Activated CD4-positive, alpha-beta memory T cell treated with anti-CD3 and anti-CD28 coated beads for 36 hours (primary cell): ENCODE measurements at regions of chr12 and their contacts with region 1.

Region 1: DNA sequence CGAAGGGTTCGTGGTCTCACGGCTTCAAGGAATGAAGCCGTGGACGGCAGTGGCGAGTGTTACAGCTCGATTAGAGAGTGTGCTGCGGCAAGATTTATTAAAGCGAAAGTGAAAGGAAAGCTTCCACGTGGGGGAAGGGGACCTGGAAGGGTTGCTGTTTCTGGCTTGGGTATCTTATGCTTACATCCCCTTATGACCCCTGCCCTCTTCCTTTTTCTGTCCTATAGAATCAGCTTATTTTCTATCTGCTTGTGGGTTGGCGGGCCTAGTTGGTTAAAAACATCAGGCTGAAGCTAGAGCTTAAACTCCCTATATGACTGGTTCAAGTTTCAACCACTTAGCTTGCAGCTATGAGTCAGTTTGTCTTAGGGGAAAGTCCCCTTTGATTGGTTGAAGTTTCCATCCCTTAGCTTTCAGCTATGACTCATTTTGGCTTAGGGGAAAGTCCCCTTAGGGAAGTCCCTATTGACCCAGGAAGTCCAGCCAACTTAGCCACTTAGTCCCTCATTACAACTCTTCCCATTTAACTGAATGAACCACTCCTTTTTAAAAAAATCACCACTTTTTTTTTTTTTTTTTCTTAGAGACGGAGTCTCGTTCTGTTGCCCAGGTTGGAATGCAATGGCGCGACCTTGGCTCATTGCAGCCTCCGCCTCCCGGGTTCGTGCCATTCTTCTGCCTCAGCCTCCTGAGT is 1494.7 kb upstream of the TMEM132C start:
- DNase-seq: peak; percentile 67
- H3K4me3 Mint-ChIP-seq: peak overlapping the region; percentile 84
- H3K27ac Mint-ChIP-seq: peak overlapping the region; percentile 93
- H3K4me1 Mint-ChIP-seq: peaks cover 28% of the 10 kb centered on the region
- H3K27me3 Mint-ChIP-seq: no peaks in the 10 kb centered on the region

Region 2: GRCh38 chr12:126708492-126708896 is 63.8 kb before region 1 on chr12:
- CTCF ChIA-PET with region 1: no interaction called
- POLR2A ChIA-PET with region 1: interaction called, 7 read pairs
- intact Hi-C with region 1: loop called (anchors 1 kb)
- DNase-seq: peak; percentile 47
- H3K4me3 Mint-ChIP-seq: no peak overlapping the region
- H3K27ac Mint-ChIP-seq: peak overlapping the region; percentile 45
- H3K4me1 Mint-ChIP-seq: peaks cover 12% of the 10 kb centered on the region
- H3K27me3 Mint-ChIP-seq: peaks cover 1% of the 10 kb centered on the region

Region 3: DNA sequence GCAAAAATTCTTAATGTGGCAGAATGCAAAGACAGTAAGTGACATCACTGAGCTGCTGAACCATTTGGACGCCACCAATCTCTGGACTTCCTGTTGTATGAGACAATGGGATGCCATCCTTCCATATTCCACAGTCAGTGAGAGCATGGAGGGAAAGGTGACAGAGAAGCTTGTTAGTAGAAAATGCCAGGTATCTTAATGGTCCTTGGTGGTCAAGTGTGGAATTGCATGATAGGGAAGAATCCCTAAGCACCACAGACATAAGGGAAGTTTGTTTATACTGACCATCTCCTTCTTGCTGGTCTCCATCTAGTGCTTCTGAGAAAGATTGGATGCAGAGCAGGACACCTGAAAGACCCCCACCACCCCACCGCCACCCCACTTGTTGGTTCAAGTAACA is 84.6 kb after region 1 on chr12:
- CTCF ChIA-PET with region 1: no interaction called
- POLR2A ChIA-PET with region 1: no interaction called
- intact Hi-C with region 1: no loop called
- DNase-seq: no peak
- H3K4me3 Mint-ChIP-seq: no peak overlapping the region
- H3K27ac Mint-ChIP-seq: no peak overlapping the region
- H3K4me1 Mint-ChIP-seq: no peaks in the 10 kb centered on the region
- H3K27me3 Mint-ChIP-seq: no peaks in the 10 kb centered on the region

Region 4: GRCh38 chr12:127083008-127083949 is 311.0 kb after region 1 on chr12:
- CTCF ChIA-PET with region 1: no interaction called
- POLR2A ChIA-PET with region 1: no interaction called
- intact Hi-C with region 1: loop called (anchors 1 kb)
- DNase-seq: peak; percentile 20
- H3K4me3 Mint-ChIP-seq: peak overlapping the region; percentile 36
- H3K27ac Mint-ChIP-seq: no peak overlapping the region
- H3K4me1 Mint-ChIP-seq: peaks cover 14% of the 10 kb centered on the region
- H3K27me3 Mint-ChIP-seq: peaks cover 4% of the 10 kb centered on the region

Region 5: DNA sequence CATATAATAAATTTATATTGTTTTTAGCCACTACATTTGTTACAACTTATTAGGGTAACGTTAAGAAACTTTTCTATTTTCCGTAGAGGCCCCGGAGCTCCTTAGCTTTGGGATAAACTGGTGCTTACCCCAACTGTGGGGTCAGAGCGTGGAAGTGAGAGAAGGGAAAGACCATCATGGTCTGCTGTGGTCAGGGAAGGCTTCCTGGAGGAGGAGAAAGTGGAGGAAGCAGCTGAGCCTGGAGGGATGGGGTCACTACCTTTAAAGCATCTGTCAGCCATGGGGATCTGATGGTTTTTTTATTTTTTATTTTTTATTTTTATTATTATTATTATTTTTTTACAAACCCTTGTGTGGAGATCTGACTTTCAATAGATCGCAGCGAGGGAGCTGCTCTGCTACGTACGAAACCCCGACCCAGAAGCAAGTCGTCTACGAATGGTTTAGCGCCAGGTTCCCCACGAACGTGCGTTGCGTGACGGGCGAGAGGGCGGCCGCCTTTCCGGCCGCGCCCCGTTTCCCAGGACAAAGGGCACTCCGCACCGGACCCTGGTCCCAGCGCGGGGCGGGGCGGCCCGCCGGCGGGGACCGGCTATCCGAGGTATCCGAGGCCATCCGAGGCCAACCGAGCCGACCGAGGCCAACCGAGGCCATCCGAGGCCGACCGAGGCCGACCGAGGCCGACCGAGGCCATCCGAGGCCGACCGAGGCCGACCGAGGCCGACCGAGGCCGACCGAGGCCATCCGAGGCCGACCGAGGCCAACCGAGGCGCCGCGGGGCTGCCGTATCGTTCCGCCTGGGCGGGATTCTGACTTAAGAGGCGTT is 393.5 kb after region 1 on chr12:
- CTCF ChIA-PET with region 1: no interaction called
- POLR2A ChIA-PET with region 1: no interaction called
- intact Hi-C with region 1: loop called (anchors 1 kb)
- DNase-seq: peak; percentile 87
- H3K4me3 Mint-ChIP-seq: peak overlapping the region; percentile 74
- H3K27ac Mint-ChIP-seq: no peak overlapping the region
- H3K4me1 Mint-ChIP-seq: peaks cover 23% of the 10 kb centered on the region
- H3K27me3 Mint-ChIP-seq: peaks cover 16% of the 10 kb centered on the region

Region 6: DNA sequence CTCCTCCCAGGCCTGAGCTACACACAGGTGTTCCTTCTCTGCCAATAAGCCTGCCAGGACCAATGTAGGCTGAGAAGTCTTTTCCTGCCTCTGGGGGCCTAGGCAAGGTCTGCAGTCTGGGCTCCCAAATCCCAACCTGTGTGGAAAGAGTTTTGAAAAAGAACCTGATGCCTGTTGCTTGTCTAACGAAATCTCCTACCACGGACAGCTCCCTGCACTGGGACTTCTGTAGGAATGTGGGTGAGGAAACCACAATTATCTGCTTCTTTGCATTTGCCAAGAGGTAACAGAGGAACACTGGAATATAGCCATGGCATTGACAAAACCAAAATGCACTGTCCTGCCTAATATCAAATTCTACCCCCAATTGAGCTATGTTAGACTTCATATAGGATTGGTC is 617.6 kb after region 1 on chr12:
- CTCF ChIA-PET with region 1: no interaction called
- POLR2A ChIA-PET with region 1: no interaction called
- intact Hi-C with region 1: no loop called
- DNase-seq: no peak
- H3K4me3 Mint-ChIP-seq: no peak overlapping the region
- H3K27ac Mint-ChIP-seq: no peak overlapping the region
- H3K4me1 Mint-ChIP-seq: no peaks in the 10 kb centered on the region
- H3K27me3 Mint-ChIP-seq: no peaks in the 10 kb centered on the region